ENCODE measurements at regions of chr22 and their contacts with region 1.

Region 1: DNA sequence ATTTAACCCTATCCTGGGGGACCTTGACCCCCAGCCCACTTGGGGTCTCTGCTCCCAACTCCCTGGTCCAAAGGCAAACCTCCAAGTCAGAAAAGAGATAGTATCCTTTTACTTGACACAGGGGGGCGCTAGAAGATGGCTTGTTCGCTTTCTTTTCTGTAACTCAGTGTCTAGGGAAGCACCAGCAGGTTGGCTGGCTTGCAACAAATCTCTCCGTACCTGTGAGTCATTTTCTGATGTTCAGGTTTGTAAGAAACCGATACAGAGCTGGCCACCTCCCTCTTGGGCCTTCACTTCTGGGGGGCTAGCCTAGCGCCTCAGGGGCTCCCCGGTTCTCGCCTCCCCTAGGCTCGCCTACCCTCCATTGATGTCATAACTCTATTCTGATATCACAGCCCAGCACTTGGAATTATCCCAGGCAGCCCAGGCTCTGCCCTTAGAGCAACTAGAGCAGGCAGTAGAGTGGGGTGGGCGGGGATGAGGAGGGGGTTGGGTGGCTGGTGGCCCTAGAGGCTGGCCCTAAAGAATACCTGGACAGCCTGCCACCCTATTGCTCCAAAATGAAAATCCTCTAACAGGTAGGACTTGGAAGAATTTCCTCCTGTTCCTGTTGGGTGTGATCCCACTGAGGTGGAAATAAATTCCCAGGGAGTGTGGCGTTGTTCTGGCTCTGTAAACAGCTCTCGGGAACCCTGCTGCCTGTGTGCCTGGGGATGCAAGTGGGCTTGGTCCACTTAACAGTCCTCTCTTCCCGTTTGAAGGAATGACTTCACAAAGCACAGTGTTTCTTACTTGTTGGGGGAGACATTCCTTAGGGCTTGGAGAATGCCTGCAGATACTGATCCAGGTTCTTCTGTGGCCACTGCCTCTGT is 69.4 kb downstream of the OSBP2 start:
- DNase-seq: peak; percentile 86
- ATAC-seq: peak; percentile 84
- H3K4me3 ChIP-seq: no peak overlapping the region
- H3K27ac ChIP-seq: no peak overlapping the region
- H3K4me1 ChIP-seq: no peaks in the 10 kb centered on the region
- H3K27me3 ChIP-seq: no peaks in the 10 kb centered on the region
- CTCF ChIP-seq: peak; percentile 90
- POLR2A ChIP-seq: no peak
- RAD21 ChIP-seq: peak; percentile 96

Region 2: DNA sequence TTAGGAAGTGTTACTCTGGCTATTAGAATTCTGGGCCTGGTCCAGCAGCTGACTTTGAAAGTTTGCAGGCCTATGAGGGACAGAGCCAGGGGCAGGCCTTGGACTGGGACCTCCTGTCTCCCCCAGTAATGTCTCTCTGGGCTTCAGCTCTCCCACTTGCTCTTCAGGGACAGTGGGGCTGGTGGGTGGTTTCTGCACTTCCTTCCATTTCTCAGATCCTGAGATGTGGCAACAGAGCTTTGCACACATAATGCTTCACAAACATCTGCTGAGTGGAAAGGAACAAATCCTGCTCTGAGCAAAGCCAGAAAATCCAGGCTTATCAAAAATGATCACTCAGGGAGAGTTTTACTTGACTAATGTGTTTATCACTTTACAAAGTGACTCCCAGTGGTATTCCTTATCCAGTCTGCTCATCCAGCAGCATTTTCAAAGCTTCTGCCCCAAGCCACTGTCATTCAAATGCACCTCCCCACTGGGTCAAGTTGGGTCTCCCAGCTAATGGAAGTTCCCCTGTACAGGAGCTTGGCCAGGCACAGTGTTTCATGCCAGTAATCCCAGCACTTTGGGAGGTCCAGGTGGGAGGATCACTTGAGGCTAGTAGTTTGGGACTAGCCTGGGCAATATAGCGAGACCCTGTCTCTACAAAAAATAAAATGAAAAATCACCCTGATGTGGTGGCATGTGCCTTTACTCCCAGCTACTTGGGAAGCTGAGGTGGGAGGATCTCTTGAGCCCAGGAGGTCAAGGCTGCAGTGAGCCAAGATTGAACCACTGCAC is 82.9 kb before region 1 on chr22:
- CTCF ChIA-PET with region 1: no interaction called
- POLR2A ChIA-PET with region 1: no interaction called
- dilution Hi-C with region 1: no loop called
- in situ Hi-C with region 1: no loop called
- intact Hi-C with region 1: no loop called
- DNase-seq: no peak
- ATAC-seq: no peak
- H3K4me3 ChIP-seq: no peak overlapping the region
- H3K27ac ChIP-seq: no peak overlapping the region
- H3K4me1 ChIP-seq: no peaks in the 10 kb centered on the region
- H3K27me3 ChIP-seq: peaks cover 14% of the 10 kb centered on the region
- CTCF ChIP-seq: no peak
- POLR2A ChIP-seq: no peak
- RAD21 ChIP-seq: no peak

Region 3: GRCh38 chr22:30806391-30806861 is 42.4 kb after region 1 on chr22:
- CTCF ChIA-PET with region 1: no interaction called
- POLR2A ChIA-PET with region 1: no interaction called
- dilution Hi-C with region 1: no loop called
- in situ Hi-C with region 1: no loop called
- intact Hi-C with region 1: no loop called
- DNase-seq: peak; percentile 67
- ATAC-seq: no peak
- H3K4me3 ChIP-seq: no peak overlapping the region
- H3K27ac ChIP-seq: no peak overlapping the region
- H3K4me1 ChIP-seq: peaks cover 3% of the 10 kb centered on the region; the same call in 1 of the 2 replicates
- H3K27me3 ChIP-seq: no peaks in the 10 kb centered on the region; the same call in none of the 2 replicates
- CTCF ChIP-seq: no peak
- POLR2A ChIP-seq: no peak
- RAD21 ChIP-seq: no peak

Region 4: DNA sequence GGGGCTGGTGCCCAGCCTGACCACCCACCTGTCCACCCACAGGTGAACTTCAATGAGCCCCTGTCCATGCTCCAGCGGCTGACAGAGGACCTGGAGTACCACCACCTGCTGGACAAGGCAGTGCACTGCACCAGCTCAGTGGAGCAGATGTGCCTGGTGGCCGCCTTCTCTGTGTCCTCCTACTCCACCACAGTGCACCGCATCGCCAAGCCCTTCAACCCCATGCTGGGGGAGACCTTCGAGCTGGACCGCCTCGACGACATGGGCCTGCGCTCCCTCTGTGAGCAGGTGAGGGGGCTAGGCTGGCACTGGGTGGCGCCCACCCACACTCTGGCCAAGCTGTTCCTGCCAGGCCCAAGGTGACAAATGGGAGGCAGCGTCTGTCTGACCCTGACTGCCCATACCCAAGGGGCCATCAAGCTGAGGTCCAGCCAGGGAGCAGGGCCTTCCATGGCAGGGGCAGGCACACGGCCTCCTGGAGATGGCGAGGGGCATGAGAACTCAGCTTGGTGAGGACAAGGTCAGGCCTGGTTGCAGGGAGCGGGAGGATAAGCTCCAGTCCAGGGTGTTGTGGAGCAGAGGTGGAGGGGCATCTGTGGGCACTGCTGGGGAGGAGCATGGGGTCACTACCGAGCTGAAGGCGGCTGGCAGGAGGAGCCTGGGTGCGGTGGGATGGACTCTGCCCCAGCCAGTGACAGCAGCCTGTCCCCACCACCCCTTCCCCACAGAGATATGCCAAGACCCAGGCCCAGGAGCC is 126.8 kb after region 1 on chr22:
- CTCF ChIA-PET with region 1: interaction called, 4 read pairs
- POLR2A ChIA-PET with region 1: no interaction called
- dilution Hi-C with region 1: no loop called
- in situ Hi-C with region 1: no loop called
- intact Hi-C with region 1: loop called (anchors 1 kb)
- DNase-seq: peak; percentile 10
- ATAC-seq: peak; percentile 97
- H3K4me3 ChIP-seq: no peak overlapping the region
- H3K27ac ChIP-seq: no peak overlapping the region
- H3K4me1 ChIP-seq: no peaks in the 10 kb centered on the region
- H3K27me3 ChIP-seq: no peaks in the 10 kb centered on the region
- CTCF ChIP-seq: peak; percentile 63
- POLR2A ChIP-seq: no peak
- RAD21 ChIP-seq: peak; percentile 63

Region 5: GRCh38 chr22:31089160-31090100 is 325.4 kb after region 1 on chr22:
- CTCF ChIA-PET with region 1: no interaction called
- POLR2A ChIA-PET with region 1: no interaction called
- dilution Hi-C with region 1: no loop called
- in situ Hi-C with region 1: no loop called
- intact Hi-C with region 1: no loop called
- DNase-seq: no peak
- ATAC-seq: peak; percentile 22
- H3K4me3 ChIP-seq: no peak overlapping the region
- H3K27ac ChIP-seq: no peak overlapping the region
- H3K4me1 ChIP-seq: peaks cover 5% of the 10 kb centered on the region
- H3K27me3 ChIP-seq: no peaks in the 10 kb centered on the region
- CTCF ChIP-seq: peak; percentile 79
- POLR2A ChIP-seq: no peak
- RAD21 ChIP-seq: peak; percentile 75

Region 6: DNA sequence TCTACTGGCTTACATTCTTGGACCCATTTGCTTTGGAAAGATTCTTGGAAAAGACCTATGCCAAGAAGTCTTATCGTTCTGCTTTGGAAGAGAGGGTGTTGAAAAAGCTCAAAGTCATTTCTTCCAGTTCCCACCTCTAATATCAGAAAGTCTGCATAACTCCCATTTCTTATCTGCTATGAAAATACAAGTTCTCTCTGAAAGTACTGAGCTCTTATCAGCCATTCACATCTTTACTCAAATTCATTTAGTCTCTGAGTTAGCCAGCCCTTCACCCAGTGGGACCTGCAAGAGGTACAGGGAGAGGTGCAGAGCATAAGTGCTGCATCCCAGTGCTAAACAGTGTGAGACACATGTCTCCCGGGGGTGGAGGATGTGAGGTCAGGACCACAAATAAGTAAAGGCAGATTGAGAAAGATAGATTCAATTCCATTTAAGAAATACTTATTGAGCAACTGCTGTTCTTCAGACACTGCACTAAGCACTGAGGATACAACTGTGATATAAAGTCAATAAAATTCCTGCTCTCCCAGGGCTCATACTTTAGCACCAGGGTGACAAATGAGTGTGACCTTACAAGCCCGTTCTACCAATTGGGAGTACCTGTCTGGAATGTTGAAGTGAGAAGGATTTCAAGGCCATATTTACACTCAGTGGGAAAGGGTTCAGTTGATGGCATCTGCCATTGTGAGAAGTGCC is 821.3 kb after region 1 on chr22:
- CTCF ChIA-PET with region 1: no interaction called
- POLR2A ChIA-PET with region 1: no interaction called
- dilution Hi-C with region 1: no loop called
- in situ Hi-C with region 1: no loop called
- intact Hi-C with region 1: no loop called
- DNase-seq: peak; percentile 60
- ATAC-seq: peak; percentile 33; the same call in 1 of the 2 replicates
- H3K4me3 ChIP-seq: no peak overlapping the region
- H3K27ac ChIP-seq: peak overlapping the region; percentile 79
- H3K4me1 ChIP-seq: peaks cover 22% of the 10 kb centered on the region
- H3K27me3 ChIP-seq: no peaks in the 10 kb centered on the region
- CTCF ChIP-seq: no peak
- POLR2A ChIP-seq: no peak
- RAD21 ChIP-seq: no peak